BJ (cell line): ENCODE measurements at regions of chr13 and their contacts with region 1.

Region 1: DNA sequence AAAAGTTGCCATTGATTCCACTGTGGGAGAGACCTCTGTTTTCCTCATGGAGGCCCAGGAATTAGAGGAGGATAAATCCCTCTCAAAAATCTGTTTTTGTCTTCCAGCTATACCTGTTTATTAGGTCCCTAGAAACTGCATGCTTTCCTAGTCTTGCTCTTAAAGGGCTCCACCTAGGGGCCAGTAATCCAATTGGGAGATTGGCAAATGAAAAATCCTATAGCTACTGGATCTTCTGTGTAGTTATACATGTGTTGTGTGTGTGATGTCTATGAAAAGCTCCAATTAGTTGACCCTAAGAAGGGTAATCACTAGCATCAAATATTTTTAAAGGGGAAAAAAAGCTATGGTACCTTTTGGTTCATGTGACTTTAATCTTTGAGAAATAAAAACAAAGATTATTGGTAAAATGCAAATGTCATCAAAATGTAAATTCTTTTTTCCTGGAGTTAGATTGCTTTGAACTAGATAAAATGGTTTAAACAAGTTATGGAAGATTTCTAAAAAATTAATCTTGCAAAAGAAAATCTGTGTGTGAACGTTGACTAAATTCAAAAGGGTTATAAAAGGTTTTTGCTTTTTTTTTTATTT is 63.4 kb upstream of the C1QTNF9B start:
- DNase-seq: no peak
- H3K4me3 ChIP-seq: no peak overlapping the region
- H3K27me3 ChIP-seq: no peaks in the 10 kb centered on the region; the same call in none of the 2 replicates
- CTCF ChIP-seq: peak; percentile 85

Region 2: DNA sequence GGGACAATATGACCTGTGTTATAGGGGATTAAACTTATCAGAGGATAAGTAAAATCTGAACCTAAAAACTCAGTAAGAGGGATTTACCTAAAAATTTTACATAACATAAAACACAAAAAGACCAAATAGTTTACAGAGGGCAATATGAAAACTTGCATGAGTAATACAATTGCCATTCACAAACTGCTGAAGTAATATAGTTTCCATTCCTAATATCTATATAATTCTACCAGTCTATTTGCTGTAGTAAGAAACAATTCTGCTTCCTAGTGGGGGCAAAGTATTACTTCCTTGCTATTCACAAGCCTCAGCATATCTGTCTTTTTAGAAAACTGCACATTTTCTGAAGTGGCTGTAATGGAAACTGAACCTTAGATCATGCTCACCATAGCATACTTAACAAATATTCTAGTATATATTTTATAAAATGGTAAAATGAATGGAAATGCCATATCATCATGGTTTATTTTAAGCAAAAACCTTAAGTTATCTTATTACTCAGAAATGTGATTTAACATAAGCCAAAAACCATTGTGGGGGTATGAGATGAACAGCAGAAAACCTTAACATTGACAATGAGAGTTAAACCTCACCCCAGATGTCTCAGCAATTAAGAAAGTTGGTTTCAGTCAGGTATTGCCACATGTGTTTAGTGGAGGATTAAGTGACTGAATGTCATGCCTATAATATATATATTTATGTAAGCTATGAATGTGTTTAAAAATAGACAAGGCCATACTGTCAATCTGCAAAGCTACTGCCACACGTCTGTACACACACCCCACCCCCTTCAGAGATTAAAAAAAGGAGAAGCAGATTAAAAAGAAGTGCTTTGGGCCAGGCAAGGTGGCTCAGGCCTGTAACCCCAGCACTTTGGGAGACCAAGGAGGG is 208.3 kb before region 1 on chr13:
- CTCF ChIA-PET with region 1: no interaction called
- POLR2A ChIA-PET with region 1: no interaction called
- DNase-seq: no peak
- H3K4me3 ChIP-seq: no peak overlapping the region
- H3K27me3 ChIP-seq: no peaks in the 10 kb centered on the region
- CTCF ChIP-seq: no peak

Region 3: DNA sequence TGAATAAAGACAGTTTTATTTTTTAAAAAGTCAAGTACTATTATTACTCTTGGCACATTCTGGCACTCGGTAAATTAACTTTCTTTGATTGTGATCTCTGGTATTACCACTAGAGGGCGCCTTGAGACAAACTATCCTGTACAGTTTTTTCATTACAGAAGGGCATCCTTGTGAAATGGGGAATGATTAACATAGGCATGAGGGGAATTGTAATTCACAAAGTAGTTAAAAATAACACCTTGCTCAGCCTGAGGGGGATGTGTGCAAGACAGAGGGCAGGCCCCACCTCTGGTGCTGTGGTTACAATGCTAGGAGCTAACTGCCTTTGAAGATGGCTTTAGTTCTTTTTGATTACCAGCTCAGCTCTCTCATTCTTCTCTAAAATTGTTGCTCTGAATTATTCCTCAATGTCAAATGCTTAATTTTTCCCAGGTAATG is 39.2 kb before region 1 on chr13:
- CTCF ChIA-PET with region 1: interaction called, 16 read pairs
- POLR2A ChIA-PET with region 1: no interaction called
- DNase-seq: no peak
- H3K4me3 ChIP-seq: no peak overlapping the region
- H3K27me3 ChIP-seq: no peaks in the 10 kb centered on the region
- CTCF ChIP-seq: peak; percentile 64

Region 4: GRCh38 chr13:24074701-24075100 is 114.0 kb after region 1 on chr13:
- CTCF ChIA-PET with region 1: no interaction called
- POLR2A ChIA-PET with region 1: no interaction called
- DNase-seq: no peak
- H3K4me3 ChIP-seq: no peak overlapping the region
- H3K27me3 ChIP-seq: no peaks in the 10 kb centered on the region
- CTCF ChIP-seq: no peak

Region 5: DNA sequence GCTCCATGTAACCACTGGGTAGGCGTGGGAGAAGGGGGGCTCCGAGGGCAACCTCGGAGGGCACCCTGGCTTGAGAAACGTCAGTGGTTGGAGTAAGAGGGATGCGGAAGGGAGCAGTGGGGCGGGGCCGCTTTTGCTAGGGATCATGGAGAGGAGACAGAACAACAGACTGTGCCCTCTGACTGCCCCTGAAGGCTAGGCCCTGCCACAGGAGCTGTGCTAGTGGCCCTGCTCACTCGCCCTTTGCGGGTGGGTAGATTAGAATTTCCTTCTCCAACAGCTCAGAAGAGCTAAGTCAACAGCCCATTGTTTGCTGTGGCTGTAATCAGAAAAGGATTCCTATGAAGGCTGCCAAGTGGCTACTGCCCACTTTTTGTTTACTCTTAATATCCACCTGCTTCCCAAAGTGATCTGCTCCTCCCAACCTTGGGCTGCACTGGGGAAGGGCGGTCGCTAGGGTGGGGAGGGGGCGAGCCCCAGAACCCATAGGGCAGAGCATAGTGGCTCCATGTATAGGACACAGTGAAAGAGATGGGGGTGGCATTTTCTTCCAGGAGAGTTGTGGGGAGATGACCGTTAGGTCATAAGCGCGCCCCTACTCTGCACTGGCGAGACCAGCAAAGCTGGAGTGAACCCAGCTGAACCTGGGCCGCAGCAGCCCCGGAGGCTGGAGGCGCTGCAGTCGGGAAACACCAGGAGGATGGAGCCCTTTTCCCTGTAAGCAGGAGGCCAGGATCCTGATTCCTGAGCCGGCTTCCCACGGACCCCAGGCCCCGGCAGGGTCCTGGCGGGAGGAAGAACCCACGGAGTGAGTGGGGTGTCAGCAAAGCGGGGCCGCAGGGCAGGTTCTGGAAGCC is 346.8 kb after region 1 on chr13:
- CTCF ChIA-PET with region 1: no interaction called
- POLR2A ChIA-PET with region 1: no interaction called
- DNase-seq: no peak
- H3K4me3 ChIP-seq: no peak overlapping the region
- H3K27me3 ChIP-seq: no peaks in the 10 kb centered on the region
- CTCF ChIP-seq: no peak